ENCODE measurements at regions of chr20 and their contacts with region 1.

Region 1: DNA sequence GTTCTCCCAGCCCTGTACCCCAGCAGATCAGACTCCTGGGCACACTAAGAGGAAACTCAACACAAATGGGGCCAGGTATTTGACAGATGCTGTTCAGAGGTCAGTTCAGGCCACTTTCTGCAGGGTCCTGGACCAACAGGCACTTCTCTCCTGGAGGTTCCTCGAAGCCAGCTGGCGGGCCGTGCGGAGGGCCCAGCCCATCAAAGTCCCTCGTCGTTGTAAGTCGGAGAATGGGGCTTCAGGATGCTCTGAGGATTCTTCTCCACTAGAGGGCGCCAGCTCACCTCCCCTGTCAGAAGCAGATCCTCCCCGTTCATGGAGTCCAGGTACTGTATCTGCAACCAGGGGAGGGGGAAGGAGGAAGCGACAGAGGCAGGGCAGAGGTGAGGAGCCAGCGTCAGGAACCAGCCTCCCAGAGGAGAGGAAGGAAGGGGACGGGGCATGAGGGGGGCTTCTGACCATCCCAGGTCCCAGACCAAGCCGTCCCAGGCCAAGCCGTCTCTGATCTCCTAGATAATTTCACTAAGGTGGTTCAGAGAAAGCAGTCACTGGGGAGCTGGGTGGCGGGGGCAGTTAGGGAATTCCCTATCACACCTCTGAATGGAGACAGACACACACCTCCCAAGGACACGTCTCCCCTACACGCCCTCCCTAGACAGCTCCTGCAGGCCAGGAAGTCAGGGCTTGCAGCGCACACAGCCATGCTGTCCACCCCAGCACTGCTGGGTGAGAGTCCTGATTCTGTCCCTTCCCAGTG is 11.7 kb upstream of the FAM83C start:
- DNase-seq: peak; percentile 71 to 84 (median 79)
- H3K4me3 ChIP-seq: no peak overlapping the region
- H3K27ac ChIP-seq: no peak overlapping the region
- H3K4me1 ChIP-seq: no peaks in the 10 kb centered on the region
- H3K27me3 ChIP-seq: no peaks in the 10 kb centered on the region
- CTCF ChIP-seq: peak; percentile 81 to 92 (median 85)
- EP300 ChIP-seq: no peak
- POLR2A ChIP-seq: peak; percentile 20

Region 2: DNA sequence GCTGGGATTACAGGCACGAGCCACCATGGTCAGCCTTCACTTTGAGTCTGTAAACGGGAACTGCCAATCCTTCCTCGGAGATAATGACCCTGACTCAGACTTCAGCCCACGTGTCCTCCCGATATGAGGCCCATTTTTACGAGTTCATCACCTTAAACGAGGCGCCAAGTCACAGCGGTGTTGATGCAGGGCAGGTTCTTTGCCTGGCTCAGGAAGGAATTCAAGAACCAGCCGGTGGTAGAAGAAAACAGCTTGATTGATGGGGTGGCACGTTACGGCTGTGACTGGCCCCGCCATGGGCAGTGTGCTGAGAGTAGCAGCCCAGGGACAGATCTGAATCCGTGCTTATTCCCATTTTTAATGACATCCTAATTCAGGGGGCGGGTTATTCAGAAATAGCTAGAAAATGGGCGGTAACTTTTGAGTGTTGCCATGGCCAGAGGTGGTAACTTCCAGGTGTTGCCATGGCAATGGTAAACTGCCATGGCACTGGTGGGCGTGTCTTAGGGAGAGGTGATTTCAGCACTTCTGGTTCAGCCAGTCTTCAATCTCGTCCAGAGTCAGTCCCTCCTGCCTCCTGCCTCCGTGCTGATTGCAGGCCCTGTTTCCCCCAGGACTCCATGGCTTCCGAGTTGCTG is 754.5 kb before region 1 on chr20:
- intact Hi-C with region 1: no loop called
- DNase-seq: no peak
- H3K4me3 ChIP-seq: no peak overlapping the region
- H3K27ac ChIP-seq: no peak overlapping the region
- H3K4me1 ChIP-seq: no peaks in the 10 kb centered on the region
- H3K27me3 ChIP-seq: no peaks in the 10 kb centered on the region
- CTCF ChIP-seq: no peak
- EP300 ChIP-seq: no peak
- POLR2A ChIP-seq: no peak

Region 3: DNA sequence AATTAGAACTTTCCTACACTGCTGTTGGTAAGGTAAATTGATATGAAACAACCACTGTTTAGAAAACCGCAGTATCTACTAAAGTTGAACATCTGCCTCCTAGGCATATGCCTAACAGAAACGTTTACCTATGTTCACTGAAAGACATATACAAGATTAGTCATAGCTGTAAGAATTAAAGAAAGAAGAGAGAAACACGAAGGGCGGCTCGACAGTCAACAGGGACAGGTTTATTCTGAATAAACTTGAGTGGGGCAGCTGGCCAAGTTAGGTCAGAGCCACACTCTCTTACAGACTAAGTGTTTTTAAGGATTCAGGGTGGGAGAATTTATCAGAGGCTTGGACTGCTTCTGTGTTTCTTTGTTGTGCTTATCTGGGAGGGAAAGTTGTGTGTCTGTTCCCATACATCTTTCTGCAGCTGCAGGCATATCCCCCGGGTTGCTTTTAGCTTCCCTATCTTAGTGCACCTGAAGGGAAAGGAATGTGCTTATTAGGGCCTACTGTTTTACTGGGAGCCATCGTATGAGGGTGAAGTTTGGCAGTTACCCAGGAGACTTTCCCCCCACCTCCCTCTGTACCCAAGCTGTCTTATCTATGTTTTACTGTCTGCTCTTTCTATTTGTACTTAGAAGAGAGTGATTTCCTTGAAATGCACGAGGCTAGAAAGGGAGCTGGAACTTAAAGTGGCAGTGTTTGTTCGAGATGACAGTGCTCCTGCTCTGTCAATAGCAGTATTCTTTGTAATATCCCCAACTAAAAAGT is 111.6 kb before region 1 on chr20:
- intact Hi-C with region 1: no loop called
- DNase-seq: peak; percentile 41 to 62 (median 57)
- H3K4me3 ChIP-seq: no peak overlapping the region
- H3K27ac ChIP-seq: peak overlapping the region in 1 of 2 donors; percentile 9
- H3K4me1 ChIP-seq: no peaks in the 10 kb centered on the region
- H3K27me3 ChIP-seq: no peaks in the 10 kb centered on the region
- CTCF ChIP-seq: no peak
- EP300 ChIP-seq: no peak
- POLR2A ChIP-seq: no peak

Region 4: GRCh38 chr20:35432430-35432735 is 128.5 kb after region 1 on chr20:
- intact Hi-C with region 1: loop called in 1 of 4 experiments (anchors 5 kb)
- DNase-seq: no peak
- H3K4me3 ChIP-seq: no peak overlapping the region
- H3K27ac ChIP-seq: no peak overlapping the region
- H3K4me1 ChIP-seq: peaks cover 3% of the 10 kb centered on the region
- H3K27me3 ChIP-seq: no peaks in the 10 kb centered on the region
- CTCF ChIP-seq: no peak
- EP300 ChIP-seq: no peak
- POLR2A ChIP-seq: no peak

Region 5: DNA sequence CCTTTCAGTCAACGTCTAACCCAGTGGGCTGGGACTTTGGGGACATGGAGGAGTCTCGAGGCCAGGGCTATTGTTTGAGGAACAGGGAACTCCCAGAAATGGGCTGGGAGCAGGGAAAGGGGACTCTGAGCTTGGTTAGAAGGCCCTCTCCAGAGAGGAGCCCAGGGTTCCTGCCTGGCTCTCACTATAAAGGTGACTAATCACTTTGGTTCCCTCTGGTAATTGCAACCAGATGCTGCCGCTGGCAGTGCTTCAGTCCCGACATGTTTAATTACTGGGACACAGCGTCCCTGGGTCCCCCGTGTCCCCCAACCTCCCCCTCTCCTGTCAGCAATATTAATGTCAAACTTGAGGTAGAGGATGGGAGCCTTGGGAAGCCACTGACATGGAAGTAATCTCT is 139.1 kb after region 1 on chr20:
- intact Hi-C with region 1: loop called (anchors 2 to 5 kb)
- DNase-seq: no peak
- H3K4me3 ChIP-seq: no peak overlapping the region
- H3K27ac ChIP-seq: no peak overlapping the region
- H3K4me1 ChIP-seq: no peaks in the 10 kb centered on the region
- H3K27me3 ChIP-seq: no peaks in the 10 kb centered on the region
- CTCF ChIP-seq: no peak
- EP300 ChIP-seq: no peak
- POLR2A ChIP-seq: no peak

Measured in ovary (tissue), 10 donors.